SK-N-SH (cell line): ENCODE measurements at regions of chr14 and their contacts with region 1.

Region 1: GRCh38 chr14:99946652-99947489 is 118.4 kb upstream of the EVL start:
- DNase-seq: peak; percentile 90
- H3K4me3 ChIP-seq: peak overlapping the region in 1 of 2 experiments; percentile 55; a peak in 1 of 4 replicates
- H3K27ac ChIP-seq: no peak overlapping the region
- H3K4me1 ChIP-seq: no peaks in the 10 kb centered on the region; a peak in 1 of 4 replicates
- H3K27me3 ChIP-seq: no peaks in the 10 kb centered on the region
- CTCF ChIP-seq: peak; percentile 97
- EP300 ChIP-seq: no peak
- RAD21 ChIP-seq: peak; percentile 55

Region 2: GRCh38 chr14:99925471-99925870 is 21.4 kb before region 1 on chr14:
- CTCF ChIA-PET with region 1: interaction called, 22 read pairs
- POLR2A ChIA-PET with region 1: no interaction called
- DNase-seq: no peak
- H3K4me3 ChIP-seq: no peak overlapping the region
- H3K27ac ChIP-seq: no peak overlapping the region
- H3K4me1 ChIP-seq: peaks cover 0 to 5% of the 10 kb centered on the region in 2 experiments; a peak in 2 of 4 replicates
- H3K27me3 ChIP-seq: no peaks in the 10 kb centered on the region
- CTCF ChIP-seq: no peak
- EP300 ChIP-seq: no peak
- RAD21 ChIP-seq: no peak

Region 3: DNA sequence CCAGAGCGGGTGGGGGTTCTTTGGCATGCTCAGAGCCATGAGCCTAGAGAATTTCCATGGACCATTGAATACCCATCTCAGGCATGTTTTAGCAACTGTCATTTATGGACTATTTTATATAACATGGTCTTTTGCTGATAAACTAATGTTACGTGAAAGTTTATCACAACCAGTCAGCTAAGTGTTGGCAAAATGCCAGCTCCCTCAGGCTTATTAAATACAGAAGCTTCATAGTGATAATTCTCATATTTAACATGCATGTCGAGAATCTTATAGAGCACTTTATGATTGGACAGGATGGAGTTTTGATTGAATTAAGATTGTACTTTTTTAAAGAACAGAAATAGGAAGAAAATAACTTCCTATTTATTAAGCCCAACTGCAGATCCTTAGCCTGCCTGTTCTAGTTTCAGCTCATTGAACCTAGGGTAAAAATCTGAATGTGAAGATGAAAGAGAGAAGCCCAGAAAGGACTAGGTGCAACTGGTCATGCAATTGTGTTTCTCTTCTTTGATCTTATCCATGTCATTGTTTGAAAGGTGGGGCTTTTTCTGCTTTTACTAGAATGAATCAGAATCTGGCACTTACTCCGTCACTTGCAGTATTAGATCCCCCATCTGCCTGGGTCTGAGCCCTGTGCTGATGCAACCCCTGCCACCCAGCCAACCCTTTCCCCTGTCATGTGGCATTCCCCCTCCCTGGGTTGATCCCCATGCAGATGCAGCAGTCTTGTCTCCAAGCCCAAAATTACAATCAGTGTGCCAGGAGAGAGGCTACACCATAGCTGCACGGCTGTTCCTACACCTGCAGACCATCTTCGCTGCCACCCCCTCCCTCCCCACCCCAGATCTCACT is 16.2 kb before region 1 on chr14:
- CTCF ChIA-PET with region 1: interaction called, 22 read pairs
- POLR2A ChIA-PET with region 1: no interaction called
- DNase-seq: peak; percentile 55
- H3K4me3 ChIP-seq: no peak overlapping the region
- H3K27ac ChIP-seq: no peak overlapping the region
- H3K4me1 ChIP-seq: peaks cover 0 to 11% of the 10 kb centered on the region in 2 experiments; a peak in 2 of 4 replicates
- H3K27me3 ChIP-seq: no peaks in the 10 kb centered on the region
- CTCF ChIP-seq: no peak
- EP300 ChIP-seq: no peak
- RAD21 ChIP-seq: no peak

Region 4: GRCh38 chr14:99961826-99962666 is 15.2 kb after region 1 on chr14:
- CTCF ChIA-PET with region 1: interaction called, 20 read pairs
- POLR2A ChIA-PET with region 1: interaction called, 3 read pairs
- DNase-seq: no peak
- H3K4me3 ChIP-seq: no peak overlapping the region
- H3K27ac ChIP-seq: no peak overlapping the region
- H3K4me1 ChIP-seq: peaks cover 0 to 16% of the 10 kb centered on the region in 2 experiments; a peak in 1 of 4 replicates
- H3K27me3 ChIP-seq: no peaks in the 10 kb centered on the region
- CTCF ChIP-seq: no peak
- EP300 ChIP-seq: no peak
- RAD21 ChIP-seq: no peak

Region 5: DNA sequence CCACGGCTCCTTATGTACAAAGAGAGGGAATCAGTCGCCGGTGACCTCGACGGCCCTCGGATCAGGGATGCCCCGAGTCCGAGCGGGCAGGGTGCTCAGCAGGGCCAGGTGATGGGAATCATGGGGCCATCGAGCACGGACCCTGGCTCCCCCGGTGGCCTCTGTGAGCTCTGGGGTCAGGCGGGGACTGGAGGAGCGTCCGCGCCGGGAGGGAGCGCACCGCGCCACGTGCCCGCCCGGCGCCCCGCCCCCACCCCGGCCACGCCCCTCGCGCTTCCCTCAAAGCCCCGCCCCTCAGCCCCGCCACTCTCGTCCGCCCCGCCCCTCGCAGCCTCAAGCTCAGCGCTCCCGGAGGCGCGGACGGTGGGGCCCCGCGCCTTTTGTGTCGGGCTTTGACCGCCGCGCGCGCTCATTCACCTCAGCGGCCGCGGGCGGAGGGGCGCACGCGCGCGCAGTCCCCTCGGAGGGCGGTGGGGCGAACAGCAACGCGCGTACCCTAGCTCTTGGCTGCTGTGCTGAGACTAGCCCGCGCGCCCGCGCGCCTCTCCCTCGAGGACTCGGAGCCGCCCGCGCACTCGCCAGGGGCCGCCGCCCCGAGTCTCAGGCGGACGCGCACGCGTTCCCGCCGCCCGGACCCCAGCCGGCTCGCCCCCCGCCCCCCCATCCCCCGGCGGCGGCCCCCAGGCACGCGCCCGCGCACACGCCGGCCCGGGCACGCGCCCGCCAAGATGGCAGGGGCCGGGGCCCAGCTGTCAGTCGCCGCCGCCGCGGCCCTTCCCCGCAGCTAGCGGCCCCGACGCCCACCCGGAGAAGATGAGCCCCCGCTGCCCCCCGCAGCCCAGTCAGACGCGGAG is 24.4 kb after region 1 on chr14:
- CTCF ChIA-PET with region 1: interaction called, 15 read pairs
- POLR2A ChIA-PET with region 1: no interaction called
- DNase-seq: peak; percentile 98
- H3K4me3 ChIP-seq: peak overlapping the region; percentile 80 to 87
- H3K27ac ChIP-seq: peak overlapping the region; percentile 34 to 88; a peak in 3 of 4 replicates
- H3K4me1 ChIP-seq: peaks cover 11 to 19% of the 10 kb centered on the region in 2 experiments; a peak in 2 of 4 replicates
- H3K27me3 ChIP-seq: no peaks in the 10 kb centered on the region
- CTCF ChIP-seq: no peak
- EP300 ChIP-seq: no peak
- RAD21 ChIP-seq: no peak